Dendritic cell treated with granulocyte-macrophage colony-stimulating factor and Interleukin-4, amounts not matched to agents 40 ng/mL and 50 ng/mL, for 4 days (primary cell): ENCODE measurements at regions of chr11 and their contacts with region 1.

Region 1: DNA sequence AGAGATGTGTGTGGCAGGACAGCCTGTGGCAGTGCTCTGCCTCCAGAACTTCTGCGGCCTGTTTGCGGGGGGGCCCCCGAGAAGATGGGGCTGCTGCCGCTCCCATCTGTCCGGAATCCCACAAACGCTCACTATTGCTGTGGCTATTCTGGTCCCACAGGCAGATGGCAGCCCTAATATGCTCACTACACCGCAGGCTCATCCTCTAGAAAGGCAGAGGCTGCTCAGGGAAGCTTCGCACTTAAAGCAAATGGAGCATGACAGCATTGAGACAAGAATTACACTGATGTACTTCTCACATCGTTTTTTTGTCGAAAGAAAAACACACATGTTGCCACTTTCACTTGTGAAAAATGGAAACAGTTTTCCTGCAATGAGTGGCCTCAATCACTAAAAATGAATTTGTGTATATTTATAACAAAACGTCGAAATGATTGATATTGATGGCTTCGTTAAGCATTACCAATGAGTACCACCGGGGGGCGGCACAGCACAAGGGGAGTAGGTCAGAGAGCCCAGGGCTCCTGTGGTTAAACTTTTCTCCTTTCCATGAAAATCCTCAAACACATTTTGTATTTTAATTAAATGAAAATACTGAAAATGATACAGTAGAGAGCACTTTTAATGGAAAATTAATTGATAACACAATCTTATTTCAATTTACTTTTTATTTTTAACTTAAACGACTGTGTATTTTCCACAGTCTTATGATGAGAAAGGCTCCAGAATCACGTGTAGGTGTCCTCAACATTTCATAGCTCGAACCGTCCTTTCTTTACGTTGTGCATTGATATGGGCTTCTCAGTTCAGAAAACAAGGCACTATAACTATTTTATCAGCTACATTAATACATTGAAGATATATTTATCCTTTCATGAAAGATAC is 69.1 kb downstream of the CTTN start:
- H3K4me3 Mint-ChIP-seq: no peak overlapping the region
- H3K27ac Mint-ChIP-seq: no peak overlapping the region
- H3K4me1 Mint-ChIP-seq: no peaks in the 10 kb centered on the region
- H3K27me3 Mint-ChIP-seq: peaks cover 38% of the 10 kb centered on the region

Region 2: DNA sequence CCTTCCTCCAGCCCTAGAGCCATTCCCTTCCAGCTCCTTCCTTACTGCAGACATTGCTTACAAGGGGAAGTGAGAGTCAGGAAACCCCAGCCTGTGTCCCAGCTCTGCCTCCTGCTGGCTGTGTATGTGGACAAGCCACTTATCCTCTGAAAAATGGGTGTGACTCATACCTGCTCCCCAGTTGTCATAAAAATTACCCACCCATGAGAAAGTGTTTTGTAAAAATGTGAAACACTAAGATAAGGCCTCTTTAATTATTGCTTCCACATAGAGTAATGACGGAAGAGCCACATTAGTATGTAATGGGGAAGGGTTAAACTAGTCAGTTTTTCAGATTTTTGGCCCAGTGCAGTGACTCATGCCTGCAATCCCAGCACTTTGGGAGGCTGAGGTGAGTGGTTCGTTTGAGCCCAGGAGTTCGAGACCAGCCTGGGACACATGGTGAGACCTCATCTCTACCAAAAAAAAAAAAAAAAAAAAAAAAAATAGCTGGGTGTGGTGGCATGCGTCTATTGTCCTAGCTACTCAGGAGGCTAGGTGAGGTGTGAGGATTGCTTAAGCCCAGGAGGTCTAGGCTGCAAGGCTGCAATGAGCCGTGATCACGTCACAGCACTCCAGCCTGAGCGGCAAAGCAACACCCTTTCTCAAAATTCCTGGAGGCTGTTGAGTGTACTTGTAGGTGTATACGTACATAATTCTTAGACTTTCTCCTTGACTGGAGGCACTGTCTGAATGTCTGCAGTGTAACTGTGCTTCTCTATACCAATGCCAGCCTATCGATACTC is 15.8 kb after region 1 on chr11:
- intact Hi-C with region 1: loop called (anchors 2 kb)
- H3K4me3 Mint-ChIP-seq: no peak overlapping the region
- H3K27ac Mint-ChIP-seq: no peak overlapping the region
- H3K4me1 Mint-ChIP-seq: no peaks in the 10 kb centered on the region
- H3K27me3 Mint-ChIP-seq: peaks cover 6% of the 10 kb centered on the region

Region 3: GRCh38 chr11:70755410-70756161 is 288.1 kb after region 1 on chr11:
- intact Hi-C with region 1: loop called (anchors 2 kb)
- H3K4me3 Mint-ChIP-seq: no peak overlapping the region
- H3K27ac Mint-ChIP-seq: no peak overlapping the region
- H3K4me1 Mint-ChIP-seq: no peaks in the 10 kb centered on the region
- H3K27me3 Mint-ChIP-seq: peaks cover 15% of the 10 kb centered on the region